ENCODE measurements at regions of chr19 and their contacts with region 1.

Region 1: DNA sequence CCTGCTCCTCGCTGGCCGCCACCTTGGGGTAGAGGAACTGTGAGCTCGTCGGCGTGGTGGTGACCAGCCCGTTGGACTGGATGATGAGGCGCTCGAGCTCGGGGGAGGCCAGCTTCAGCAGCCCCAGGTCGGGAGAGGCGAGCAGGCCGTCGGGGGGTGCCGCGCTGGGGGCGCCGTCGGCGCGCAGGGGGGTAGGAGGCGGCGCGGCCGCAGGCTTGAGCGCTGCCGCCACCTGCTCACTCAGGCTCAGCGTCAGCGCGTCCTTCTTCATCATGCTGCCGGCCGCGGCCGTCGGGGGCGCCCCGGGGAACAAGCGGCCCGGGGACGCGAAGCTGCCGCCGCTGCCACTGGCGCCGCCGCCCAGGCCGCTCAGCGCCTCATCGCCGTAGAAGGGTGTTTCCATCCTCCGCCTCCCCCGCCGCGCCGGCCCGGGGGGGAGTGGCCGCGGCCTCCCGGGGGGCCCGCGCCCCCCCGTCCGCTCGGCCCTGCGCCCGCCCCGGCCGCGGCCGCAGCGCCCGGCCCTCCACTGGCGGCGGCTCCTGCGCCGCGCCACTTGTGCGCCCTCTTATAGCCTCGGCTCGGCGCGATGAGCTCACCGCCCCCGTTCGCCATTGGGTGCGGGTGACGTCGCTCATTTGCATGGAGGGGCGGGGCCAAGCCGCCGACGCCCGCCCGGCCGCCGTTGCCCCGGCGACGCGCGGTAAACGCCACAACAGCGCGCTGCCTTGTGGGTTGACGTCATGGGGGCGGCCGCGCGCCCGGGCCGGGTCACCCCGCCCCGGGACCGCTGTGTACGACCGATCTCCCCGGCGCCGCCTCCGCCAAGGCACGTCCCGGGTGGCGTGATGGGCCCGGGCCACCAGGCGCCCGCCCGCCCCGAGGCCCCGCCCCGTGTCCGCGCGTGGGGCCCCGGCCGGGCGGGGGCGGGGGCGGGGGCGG is at the start of gene JUND:
- DNase-seq: peak; percentile 96
- H3K4me3 Mint-ChIP-seq: peak within 1 kb of the TSS; percentile 95
- H3K27ac Mint-ChIP-seq: peak within 1 kb of the TSS; percentile 99
- H3K4me1 Mint-ChIP-seq: peaks cover 45% of the 10 kb centered on the region
- H3K27me3 Mint-ChIP-seq: no peaks in the 10 kb centered on the region
- total RNA-seq, gene JUND: 87.9 to 105 TPM

Region 2: DNA sequence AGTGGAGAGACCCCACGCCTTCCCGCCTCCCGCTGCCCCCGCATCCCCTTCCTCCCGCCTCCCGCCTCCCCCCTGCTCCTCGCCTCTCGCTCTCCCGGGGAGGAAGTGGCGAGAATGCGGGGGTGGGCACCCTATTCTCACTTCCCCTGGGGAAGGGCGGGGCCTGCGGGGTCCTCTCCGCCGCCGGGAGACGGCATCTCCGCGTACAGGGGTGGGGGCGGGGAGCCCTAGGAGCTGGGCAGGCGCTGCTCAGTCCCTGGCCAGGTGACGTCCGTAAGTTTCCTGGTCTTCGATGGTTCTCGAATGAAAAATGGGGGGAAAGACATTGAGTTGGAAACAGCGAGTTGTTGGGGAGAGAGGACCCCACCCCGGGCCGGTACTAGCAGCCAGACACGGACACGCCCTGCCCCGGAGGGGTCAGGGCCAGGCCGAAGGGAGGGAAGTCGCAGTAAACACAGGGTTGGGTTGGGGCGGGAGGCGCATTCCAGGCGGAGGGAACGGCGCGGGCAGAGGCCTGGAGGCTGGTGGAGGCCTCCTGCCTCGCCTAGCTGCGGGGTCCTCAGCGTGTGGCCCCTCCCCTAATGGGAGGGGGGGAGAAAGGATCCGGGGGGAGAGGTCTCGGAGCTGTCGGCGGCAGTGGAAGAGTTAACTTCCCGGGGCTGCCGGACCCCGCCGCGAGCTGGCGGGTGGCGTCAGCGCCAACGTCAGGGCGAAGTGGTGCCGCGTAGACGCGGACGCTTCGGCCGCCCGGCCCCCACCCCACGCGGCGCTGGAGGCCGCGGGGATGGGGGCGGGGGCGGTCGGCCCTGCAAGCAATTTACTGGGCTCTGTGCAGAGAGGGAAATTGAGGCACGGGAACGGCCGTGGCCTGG is 10.5 kb after region 1 on chr19:
- CTCF ChIA-PET with region 1: interaction called, 145 read pairs
- intact Hi-C with region 1: loop called (anchors 1 kb)
- DNase-seq: peak; percentile 93
- H3K4me3 Mint-ChIP-seq: peak overlapping the region; percentile 89
- H3K27ac Mint-ChIP-seq: peak overlapping the region; percentile 98
- H3K4me1 Mint-ChIP-seq: peaks cover 60% of the 10 kb centered on the region
- H3K27me3 Mint-ChIP-seq: no peaks in the 10 kb centered on the region

Region 3: DNA sequence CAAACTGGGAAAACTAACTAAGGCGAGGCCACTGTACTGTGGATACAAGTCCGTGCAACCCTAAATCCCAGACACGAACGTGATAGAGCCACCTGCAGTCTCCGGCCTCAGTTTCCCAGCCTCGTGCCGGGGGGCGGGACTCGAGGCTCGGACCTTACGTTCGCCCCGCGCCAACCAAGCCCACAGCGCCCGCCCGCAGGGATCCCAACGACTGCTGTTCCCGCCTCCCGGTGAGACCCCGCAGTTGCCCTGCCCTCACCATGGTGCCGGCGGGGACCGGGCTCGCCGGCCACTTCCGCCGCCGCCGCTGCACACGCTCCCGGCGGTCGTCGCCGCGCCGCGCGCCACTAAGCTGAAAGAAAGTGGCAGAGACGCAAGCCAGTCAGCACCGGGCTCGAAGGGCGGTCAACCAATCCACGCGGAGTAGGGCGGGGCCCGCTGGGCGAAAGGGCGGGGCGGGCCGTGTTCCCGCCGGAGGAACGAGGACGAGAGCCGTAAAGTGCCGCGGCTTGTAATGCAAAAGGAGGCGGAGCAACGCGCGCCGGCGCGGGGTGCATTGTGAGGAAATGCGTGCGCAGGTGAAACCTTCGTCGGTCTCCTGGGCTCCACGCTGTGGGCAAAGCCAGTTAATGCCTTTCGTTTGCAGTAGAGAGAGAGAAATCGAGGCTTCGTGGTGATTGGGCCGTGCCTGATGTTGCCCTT is 41.6 kb after region 1 on chr19 and contains the start of gene LSM4:
- CTCF ChIA-PET with region 1: interaction called, 240 read pairs
- intact Hi-C with region 1: loop called (anchors 1 kb)
- DNase-seq: peak; percentile 100
- H3K4me3 Mint-ChIP-seq: peak within 1 kb of the TSS; percentile 93
- H3K27ac Mint-ChIP-seq: peak within 1 kb of the TSS; percentile 98
- H3K4me1 Mint-ChIP-seq: peaks cover 51% of the 10 kb centered on the region
- H3K27me3 Mint-ChIP-seq: no peaks in the 10 kb centered on the region
- total RNA-seq, gene LSM4: 439 to 451 TPM

Region 4: DNA sequence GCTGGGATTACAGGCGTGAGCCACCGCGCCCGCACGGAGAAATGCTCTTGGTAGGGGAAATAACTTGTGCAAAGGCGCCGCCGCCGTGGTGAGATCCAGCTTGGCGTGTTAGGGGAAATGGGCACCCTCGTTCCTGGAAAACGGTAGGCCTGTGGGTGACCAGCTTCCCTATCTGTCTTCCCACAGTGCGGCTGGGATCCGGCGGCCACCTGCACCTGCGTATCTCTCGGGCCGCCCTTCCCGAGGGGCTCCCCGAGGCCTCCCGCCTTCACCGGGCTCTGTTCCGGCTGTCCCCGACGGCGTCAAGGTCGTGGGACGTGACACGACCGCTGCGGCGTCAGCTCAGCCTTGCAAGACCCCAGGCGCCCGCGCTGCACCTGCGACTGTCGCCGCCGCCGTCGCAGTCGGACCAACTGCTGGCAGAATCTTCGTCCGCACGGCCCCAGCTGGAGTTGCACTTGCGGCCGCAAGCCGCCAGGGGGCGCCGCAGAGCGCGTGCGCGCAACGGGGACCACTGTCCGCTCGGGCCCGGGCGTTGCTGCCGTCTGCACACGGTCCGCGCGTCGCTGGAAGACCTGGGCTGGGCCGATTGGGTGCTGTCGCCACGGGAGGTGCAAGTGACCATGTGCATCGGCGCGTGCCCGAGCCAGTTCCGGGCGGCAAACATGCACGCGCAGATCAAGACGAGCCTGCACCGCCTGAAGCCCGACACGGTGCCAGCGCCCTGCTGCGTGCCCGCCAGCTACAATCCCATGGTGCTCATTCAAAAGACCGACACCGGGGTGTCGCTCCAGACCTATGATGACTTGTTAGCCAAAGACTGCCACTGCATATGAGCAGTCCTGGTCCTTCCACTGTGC is 107.0 kb after region 1 on chr19:
- CTCF ChIA-PET with region 1: interaction called, 38 read pairs
- intact Hi-C with region 1: no loop called
- DNase-seq: peak; percentile 78
- H3K4me3 Mint-ChIP-seq: peak overlapping the region; percentile 60
- H3K27ac Mint-ChIP-seq: no peak overlapping the region
- H3K4me1 Mint-ChIP-seq: no peaks in the 10 kb centered on the region
- H3K27me3 Mint-ChIP-seq: peaks cover 32% of the 10 kb centered on the region

Region 5: DNA sequence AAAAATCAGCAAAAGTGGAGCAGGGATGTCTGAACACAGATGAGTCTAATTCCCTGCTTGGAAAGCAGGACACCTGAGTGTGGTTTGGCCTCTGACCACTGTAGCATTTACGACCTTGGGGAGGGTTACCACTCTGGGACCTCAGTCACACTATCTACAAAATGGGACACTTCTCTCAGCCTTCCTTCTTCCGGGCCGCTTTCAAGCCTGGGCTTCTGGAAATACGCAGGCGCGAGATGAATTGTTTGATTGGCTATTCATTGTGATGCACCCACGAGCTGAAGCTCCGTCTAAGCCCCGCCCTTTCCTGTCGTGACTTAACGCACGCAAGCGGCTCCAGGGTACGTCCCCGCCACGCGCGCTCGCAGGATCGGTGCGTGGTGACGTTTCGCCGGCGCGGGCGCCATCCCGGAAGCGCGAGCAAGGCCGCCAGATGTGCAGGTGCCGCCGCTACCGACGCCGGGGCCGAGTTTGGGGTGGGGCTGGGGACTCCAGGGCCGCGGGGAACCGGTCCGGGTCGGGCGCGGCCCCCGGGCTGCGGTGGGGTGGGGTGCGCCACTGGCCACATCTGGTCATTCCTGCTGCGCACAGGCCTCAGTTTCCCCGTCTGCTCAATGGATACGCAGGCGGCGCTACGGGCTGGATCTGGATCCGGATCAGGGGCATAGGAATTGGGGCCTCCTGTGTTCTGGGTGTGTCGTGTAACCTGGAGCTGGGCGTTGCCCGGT is 276.3 kb after region 1 on chr19 and contains the start of gene KXD1:
- CTCF ChIA-PET with region 1: no interaction called
- intact Hi-C with region 1: loop called (anchors 1 kb)
- DNase-seq: peak; percentile 99
- H3K4me3 Mint-ChIP-seq: peak within 1 kb of the TSS; percentile 93
- H3K27ac Mint-ChIP-seq: peak within 1 kb of the TSS; percentile 92
- H3K4me1 Mint-ChIP-seq: peaks cover 24% of the 10 kb centered on the region
- H3K27me3 Mint-ChIP-seq: no peaks in the 10 kb centered on the region
- total RNA-seq, gene KXD1: 86.7 TPM

Region 6: DNA sequence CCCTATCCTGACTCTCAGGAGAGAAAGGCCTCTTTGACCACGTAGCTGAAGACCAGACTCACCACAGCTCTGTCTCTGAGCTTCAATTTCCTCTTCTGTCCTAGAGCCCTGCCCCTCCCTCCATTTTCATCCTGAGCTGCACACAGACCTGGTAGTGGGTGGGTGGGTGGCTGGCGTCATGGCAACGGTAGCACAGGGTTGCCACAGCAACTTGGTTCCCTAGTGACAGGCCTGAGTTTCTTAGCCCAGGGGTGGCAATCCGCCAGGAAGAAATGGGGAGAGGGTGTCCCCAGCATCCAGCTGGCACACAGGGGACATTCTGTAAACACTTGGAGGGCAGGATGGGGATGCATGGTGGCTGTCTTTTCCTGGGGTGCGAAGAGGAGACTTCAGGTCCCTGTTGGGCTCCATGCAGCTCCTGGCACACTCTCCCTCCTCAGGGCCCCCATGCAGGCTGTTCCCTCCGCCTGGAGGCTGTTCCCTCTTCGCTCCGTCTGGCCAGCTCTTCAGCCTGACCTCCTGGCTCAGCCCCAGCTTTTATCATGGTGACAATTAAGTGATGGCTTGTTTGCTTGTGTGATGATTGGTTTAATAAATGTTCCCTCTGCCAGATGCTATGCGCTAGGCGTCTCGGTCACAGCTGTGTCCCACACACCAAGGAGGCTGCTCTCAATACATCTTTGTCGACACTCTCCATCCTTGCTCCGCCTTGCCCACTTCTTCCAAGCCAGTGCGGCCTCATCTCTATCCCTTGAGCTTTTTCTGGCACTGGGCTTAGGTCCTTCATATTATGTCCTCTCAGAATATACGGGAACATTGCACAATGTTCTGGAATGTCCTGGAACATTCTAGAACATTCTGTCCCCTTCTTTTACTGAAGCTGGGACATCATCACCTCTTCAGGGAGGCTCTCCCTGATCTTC is 348.1 kb after region 1 on chr19:
- CTCF ChIA-PET with region 1: no interaction called
- intact Hi-C with region 1: no loop called
- DNase-seq: no peak
- H3K4me3 Mint-ChIP-seq: no peak overlapping the region
- H3K27ac Mint-ChIP-seq: no peak overlapping the region
- H3K4me1 Mint-ChIP-seq: no peaks in the 10 kb centered on the region
- H3K27me3 Mint-ChIP-seq: no peaks in the 10 kb centered on the region